Sciatic nerve (tissue), 2 donors: ENCODE measurements at regions of chr2 and their contacts with region 1.

Region 1: DNA sequence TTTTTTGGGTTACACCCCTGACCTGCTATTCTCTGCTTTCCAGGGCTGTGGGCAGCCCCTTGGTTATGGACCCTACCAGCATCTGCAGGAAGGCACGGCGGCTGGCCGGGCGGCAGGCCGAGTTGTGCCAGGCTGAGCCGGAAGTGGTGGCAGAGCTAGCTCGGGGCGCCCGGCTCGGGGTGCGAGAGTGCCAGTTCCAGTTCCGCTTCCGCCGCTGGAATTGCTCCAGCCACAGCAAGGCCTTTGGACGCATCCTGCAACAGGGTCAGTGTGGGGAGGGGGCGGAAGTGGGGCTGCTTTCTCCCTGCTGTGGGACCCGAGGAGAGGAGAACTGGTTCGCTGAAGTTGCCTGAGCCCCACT is 9.7 kb upstream of the WNT10A start:
- DNase-seq: no peak
- ATAC-seq: no peak

Region 2: DNA sequence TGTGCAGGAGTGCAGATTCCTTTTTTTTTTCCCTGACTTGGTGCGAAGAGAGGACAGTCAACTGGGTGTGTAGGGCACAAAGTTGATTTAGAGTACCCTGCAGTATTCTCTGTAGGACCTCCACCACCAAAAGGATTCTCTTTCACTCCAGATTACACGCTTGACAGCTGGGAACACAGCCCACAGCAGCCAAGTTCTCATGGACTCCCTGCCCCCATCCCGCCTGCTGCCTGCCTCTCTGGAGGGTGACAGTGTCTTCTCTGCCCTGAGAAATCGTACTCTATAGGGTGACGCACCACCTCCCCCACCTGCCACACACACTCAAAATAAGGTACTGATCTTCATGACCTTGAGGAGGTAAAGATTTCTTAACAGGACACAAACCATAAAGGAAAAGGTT is 216.4 kb after region 1 on chr2:
- intact Hi-C with region 1: loop called (anchors 5 kb)
- DNase-seq: no peak
- ATAC-seq: no peak